ENCODE measurements at regions of chr7 and their contacts with region 1.

Region 1: GRCh38 chr7:148877517-148877916 is 6.6 kb downstream of the EZH2 start:
- DNase-seq: no peak
- H3K4me3 Mint-ChIP-seq: no peak overlapping the region
- H3K27ac Mint-ChIP-seq: no peak overlapping the region
- H3K4me1 Mint-ChIP-seq: peaks cover 48% of the 10 kb centered on the region
- H3K27me3 Mint-ChIP-seq: no peaks in the 10 kb centered on the region

Region 2: GRCh38 chr7:148862481-148862880 is 15.0 kb before region 1 on chr7:
- intact Hi-C with region 1: loop called (anchors 2 kb)
- DNase-seq: no peak
- H3K4me3 Mint-ChIP-seq: no peak overlapping the region
- H3K27ac Mint-ChIP-seq: no peak overlapping the region
- H3K4me1 Mint-ChIP-seq: peaks cover 39% of the 10 kb centered on the region
- H3K27me3 Mint-ChIP-seq: no peaks in the 10 kb centered on the region

Region 3: DNA sequence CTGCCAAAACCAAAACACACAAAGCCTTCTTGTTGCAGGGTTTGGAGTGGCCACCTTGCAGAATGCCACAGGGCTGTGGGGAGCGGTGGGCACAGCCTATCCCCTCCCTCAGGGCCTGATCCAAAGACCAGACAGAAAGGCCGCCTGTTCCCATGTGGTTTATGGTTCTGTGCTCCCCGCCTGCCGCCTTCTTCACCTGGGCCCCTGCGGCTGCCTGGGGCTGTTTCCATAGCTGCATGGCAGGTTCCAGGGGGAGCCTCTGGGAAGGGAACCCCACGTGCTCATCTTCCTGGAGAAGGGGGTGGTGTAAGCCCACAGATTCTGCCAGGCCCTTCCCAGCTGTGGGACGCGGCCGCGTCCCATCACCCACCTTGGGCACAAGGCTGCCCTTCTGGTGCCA is 77.2 kb after region 1 on chr7:
- intact Hi-C with region 1: no loop called
- DNase-seq: no peak
- H3K4me3 Mint-ChIP-seq: no peak overlapping the region
- H3K27ac Mint-ChIP-seq: no peak overlapping the region
- H3K4me1 Mint-ChIP-seq: no peaks in the 10 kb centered on the region
- H3K27me3 Mint-ChIP-seq: no peaks in the 10 kb centered on the region